Activated CD4-positive, alpha-beta T cell treated with anti-CD3 and anti-CD28 coated beads for 36 hours (primary cell): ENCODE measurements at regions of chr17 and their contacts with region 1.

Region 1: DNA sequence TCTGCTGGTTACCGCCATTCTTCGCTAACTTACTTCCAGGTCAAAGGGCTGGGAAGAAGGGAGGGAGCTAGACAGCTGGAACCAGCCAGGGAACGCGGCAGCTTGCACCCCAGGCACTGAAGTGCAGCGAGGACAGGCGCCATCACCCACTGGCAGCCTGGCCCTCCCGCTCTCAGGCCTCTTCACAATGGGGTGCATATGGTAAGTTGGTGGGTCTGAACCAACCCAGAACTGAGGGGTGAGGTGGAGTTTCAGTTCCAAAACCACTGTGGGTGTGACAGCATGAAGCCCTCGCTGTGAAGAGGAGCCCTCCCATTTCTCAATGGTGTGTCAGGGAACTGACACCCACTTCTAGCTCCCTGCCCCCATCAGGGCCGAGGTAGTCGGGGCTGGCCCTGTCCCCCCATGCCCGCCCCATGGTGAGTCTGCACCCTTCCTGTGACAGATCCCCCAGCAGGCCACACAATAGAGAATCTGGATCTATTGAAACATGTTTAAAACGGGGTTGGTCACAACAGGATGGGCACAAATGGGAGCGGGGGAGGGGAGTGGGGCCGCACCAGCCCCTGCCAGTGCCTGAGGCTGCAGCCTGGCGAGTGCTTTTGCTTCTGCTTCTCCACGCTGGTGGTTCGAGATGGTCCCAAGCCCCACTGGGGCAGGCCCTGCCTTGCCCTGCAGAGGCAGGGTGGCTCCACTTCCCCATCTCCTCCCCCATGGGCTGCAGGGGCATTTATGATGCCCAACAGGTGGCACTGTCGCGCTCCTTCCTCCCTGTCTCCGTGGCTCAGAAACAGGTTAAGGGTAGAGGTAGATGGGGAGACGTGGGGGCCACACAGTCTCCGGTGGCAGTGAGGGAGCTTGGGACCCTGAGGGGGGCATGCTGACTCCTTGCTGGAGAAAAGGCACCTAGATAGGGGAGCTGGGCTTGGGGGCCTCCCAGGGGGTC is 2.3 kb downstream of the LIMD2 start:
- DNase-seq: peak; percentile 90
- ATAC-seq: peak; percentile 42
- H3K4me3 Mint-ChIP-seq: peak overlapping the region; percentile 79
- H3K27ac Mint-ChIP-seq: peak overlapping the region; percentile 88
- H3K4me1 Mint-ChIP-seq: peaks cover 64% of the 10 kb centered on the region
- H3K27me3 Mint-ChIP-seq: no peaks in the 10 kb centered on the region

Region 2: GRCh38 chr17:63425482-63425881 is 272.1 kb before region 1 on chr17:
- CTCF ChIA-PET with region 1: interaction called, 5 read pairs
- POLR2A ChIA-PET with region 1: no interaction called
- intact Hi-C with region 1: loop called (anchors 5 to 10 kb)
- DNase-seq: peak; percentile 82
- ATAC-seq: peak; percentile 93
- H3K4me3 Mint-ChIP-seq: no peak overlapping the region
- H3K27ac Mint-ChIP-seq: no peak overlapping the region
- H3K4me1 Mint-ChIP-seq: peaks cover 27% of the 10 kb centered on the region
- H3K27me3 Mint-ChIP-seq: no peaks in the 10 kb centered on the region

Region 3: GRCh38 chr17:63709098-63709497 is 11.5 kb after region 1 on chr17:
- CTCF ChIA-PET with region 1: interaction called, 23 read pairs
- POLR2A ChIA-PET with region 1: interaction called, 13 read pairs
- intact Hi-C with region 1: loop called in 1 of 2 experiments (anchors 2 kb)
- DNase-seq: no peak
- ATAC-seq: no peak
- H3K4me3 Mint-ChIP-seq: no peak overlapping the region
- H3K27ac Mint-ChIP-seq: peak overlapping the region; percentile 44
- H3K4me1 Mint-ChIP-seq: peaks cover 52% of the 10 kb centered on the region
- H3K27me3 Mint-ChIP-seq: no peaks in the 10 kb centered on the region

Region 4: DNA sequence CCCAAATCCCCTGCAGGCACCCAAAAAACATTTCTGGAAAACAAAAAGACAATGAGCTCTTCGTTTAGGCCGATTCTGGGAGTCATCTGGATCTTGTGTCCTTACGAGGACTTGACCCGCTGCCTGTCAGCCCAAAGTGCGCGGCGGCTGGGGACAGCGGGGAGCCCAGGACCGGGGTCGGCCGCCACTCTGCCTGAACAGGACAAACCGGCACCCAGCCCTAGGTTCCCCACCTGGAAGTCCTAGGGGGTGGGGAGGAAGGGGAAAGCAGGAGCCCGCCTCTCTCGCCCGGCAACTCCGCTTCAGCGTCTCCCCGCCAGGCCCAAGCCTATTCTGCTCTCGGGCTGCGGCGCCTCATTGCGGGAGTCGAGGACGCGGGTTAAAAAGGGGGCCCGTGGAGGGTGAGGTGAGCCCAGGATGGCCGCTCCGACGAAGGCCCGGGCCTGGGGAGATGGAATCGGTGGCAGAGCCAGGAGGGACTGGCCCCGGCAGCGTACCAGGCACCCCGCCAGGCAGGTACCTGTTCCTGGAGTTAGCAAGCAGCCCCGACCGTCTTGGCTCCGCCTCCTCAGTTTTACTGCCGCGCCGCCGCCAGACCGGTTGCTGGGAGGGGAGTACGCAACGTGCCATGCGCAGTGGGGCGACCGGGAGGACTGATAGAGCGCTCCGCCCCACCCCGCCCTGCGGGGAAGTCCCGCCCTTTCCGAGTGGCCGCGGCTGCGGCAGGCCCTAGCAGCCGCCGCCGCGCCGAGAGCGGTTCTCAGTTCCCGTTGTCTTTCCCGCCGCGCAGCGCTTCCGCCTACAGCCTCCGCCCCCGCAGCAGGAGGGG is 43.8 kb after region 1 on chr17 and contains the start of gene STRADA:
- CTCF ChIA-PET with region 1: interaction called, 5 read pairs
- POLR2A ChIA-PET with region 1: interaction called, 6 read pairs
- intact Hi-C with region 1: loop called (anchors 1 kb)
- DNase-seq: peak; percentile 100
- ATAC-seq: peak; percentile 94
- H3K4me3 Mint-ChIP-seq: peak within 1 kb of the TSS; percentile 91
- H3K27ac Mint-ChIP-seq: peak within 1 kb of the TSS; percentile 95
- H3K4me1 Mint-ChIP-seq: peaks cover 29% of the 10 kb centered on the region
- H3K27me3 Mint-ChIP-seq: no peaks in the 10 kb centered on the region
- total RNA-seq, gene STRADA: 51.0 to 53.6 TPM

Region 5: GRCh38 chr17:63827002-63827771 is 129.6 kb after region 1 on chr17 and contains the starts of genes FTSJ3 and PSMC5:
- CTCF ChIA-PET with region 1: interaction called, 4 read pairs
- POLR2A ChIA-PET with region 1: no interaction called
- intact Hi-C with region 1: loop called (anchors 1 to 5 kb)
- DNase-seq: peak; percentile 97
- ATAC-seq: peak; percentile 94
- H3K4me3 Mint-ChIP-seq: peak within 1 kb of the TSS; percentile 88
- H3K27ac Mint-ChIP-seq: peak within 1 kb of the TSS; percentile 99
- H3K4me1 Mint-ChIP-seq: peaks cover 72% of the 10 kb centered on the region
- H3K27me3 Mint-ChIP-seq: no peaks in the 10 kb centered on the region
- total RNA-seq, gene FTSJ3: 52.1 to 61.2 TPM
- total RNA-seq, gene PSMC5: 98.2 to 160 TPM

Region 6: GRCh38 chr17:64016231-64016784 is 318.7 kb after region 1 on chr17:
- CTCF ChIA-PET with region 1: no interaction called
- POLR2A ChIA-PET with region 1: no interaction called
- intact Hi-C with region 1: no loop called
- DNase-seq: no peak
- ATAC-seq: no peak
- H3K4me3 Mint-ChIP-seq: peak overlapping the region; percentile 84
- H3K27ac Mint-ChIP-seq: peak overlapping the region; percentile 95
- H3K4me1 Mint-ChIP-seq: peaks cover 66% of the 10 kb centered on the region
- H3K27me3 Mint-ChIP-seq: no peaks in the 10 kb centered on the region